HEK293T (cell line): ENCODE measurements at regions of chr12 and their contacts with region 1.

Region 1: DNA sequence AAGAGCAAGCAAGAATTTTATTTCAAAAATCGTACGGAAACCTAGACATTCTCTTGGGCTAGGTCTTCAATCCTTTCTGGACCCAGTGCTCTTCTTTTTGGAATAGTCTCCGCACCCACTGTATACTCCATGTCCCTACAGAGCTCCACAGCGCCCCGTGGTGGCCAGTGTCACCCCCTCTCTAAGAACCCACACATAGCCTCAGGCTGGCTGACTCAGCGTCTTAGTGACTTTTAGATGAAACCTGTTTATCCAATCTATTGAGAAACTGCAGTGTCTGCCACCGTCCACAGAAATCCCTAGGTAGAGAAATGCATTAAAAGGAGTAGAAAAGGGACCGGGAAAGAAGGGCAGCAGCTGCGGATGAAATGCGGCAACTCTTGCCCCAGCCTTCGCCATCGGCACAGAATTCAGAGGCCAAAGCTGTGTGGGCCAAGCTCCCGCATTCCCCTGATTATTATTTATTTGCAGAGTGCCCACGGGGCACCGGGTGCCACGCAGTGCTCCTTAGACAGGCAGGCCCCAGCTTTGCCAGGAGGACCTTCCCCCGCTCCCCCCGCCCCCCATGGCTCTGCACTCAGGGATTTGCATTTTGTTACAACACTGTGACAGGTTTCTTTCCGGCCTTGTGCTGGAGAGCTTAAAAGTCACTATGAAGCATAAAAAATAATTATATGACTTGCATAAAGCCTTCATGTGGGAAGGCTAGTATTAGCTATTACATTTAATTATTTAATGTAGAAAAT is 170.1 kb upstream of the FKBP4 start:
- DNase-seq: peak; percentile 60

Region 2: DNA sequence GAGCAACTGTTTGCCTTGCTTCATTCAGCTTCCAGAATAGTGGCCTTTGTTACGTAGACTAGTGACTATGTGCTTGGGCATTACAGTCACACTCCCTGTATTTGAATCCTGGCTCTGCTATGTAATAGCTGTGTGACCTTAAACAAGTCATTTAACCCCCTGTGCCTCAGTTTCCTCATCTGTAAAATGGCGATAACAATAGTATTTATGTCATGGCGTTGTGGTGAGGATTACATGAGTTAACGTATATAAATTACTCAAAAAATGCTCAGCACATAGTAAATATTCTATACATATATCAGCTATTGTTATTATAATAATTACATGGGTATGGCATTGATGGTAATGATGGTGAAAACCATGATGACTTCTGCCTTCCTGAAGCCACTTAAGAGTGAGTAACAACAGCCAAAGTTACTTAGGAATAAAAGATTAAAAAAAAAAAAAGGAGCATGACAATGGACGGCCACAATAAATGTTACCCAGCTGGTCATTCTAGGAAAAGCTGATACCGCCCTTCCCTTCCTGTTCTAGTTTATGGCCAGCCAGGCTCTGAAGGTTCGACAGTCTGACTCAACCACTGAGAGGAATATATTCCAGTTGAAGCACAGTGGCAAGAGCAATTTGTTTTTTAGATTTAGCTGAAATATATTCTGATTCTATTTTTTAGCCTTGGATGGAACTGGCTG is 943.8 kb before region 1 on chr12:
- CTCF ChIA-PET with region 1: interaction called, 12 read pairs
- POLR2A ChIA-PET with region 1: no interaction called
- DNase-seq: no peak

Region 3: DNA sequence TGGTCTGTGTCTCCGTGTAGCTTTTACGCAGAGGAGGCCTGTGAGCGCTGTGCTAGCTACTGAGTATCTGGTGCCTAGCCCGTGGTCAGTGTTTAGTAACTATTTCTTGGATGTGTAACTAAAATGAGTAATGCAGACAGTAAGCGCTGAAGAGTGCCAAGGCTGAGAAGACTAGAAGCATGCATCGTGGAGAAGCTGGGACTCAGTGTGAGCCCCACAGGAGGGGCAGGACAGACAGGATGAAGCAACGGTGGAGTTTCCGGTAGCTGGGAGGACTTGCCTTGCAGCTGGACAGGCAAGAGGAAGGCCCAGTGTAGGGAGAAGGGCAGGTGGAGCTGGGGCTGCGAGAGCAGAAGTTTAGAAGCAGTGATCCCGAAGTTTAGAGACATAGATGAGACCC is 63.3 kb before region 1 on chr12:
- CTCF ChIA-PET with region 1: no interaction called
- POLR2A ChIA-PET with region 1: no interaction called
- DNase-seq: no peak

Region 4: GRCh38 chr12:2586156-2587045 is 38.3 kb before region 1 on chr12:
- CTCF ChIA-PET with region 1: no interaction called
- POLR2A ChIA-PET with region 1: no interaction called
- DNase-seq: no peak

Region 5: DNA sequence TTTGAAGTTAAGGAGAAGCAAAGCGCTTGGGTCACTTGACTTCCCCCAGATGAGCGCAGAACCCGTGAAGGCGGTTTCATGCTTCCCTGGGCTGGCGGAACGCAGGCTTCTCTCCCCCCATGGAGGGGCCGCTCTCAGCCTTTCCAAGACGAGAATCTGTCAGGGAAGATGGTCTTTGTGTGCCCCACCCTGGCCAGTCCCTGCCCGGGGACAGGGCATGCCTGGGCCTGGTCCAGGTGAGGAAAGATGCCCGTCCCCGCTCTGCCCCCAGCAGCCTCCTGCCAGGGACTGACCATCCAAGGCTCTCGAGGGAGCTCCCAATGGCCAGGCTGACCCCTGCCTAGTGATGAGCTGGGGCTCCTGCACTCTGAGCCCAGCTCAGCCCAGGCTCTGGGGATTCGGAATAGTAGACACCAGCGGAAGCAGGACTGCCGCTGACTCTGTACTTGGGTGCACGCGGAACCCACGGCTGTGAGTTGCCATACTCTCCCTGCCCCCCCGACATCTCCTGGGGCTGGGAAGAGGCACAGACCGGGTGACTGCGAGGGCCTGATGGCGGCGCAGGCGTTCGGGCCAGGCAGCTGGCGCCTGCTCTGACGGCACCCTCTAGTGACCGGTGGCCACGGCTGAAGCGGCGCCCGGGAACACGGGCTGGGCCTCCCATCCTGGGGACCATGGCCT is 27.8 kb after region 1 on chr12:
- CTCF ChIA-PET with region 1: no interaction called
- POLR2A ChIA-PET with region 1: no interaction called
- DNase-seq: no peak